ENCODE measurements at regions of chr22 and their contacts with region 1.

Region 1: DNA sequence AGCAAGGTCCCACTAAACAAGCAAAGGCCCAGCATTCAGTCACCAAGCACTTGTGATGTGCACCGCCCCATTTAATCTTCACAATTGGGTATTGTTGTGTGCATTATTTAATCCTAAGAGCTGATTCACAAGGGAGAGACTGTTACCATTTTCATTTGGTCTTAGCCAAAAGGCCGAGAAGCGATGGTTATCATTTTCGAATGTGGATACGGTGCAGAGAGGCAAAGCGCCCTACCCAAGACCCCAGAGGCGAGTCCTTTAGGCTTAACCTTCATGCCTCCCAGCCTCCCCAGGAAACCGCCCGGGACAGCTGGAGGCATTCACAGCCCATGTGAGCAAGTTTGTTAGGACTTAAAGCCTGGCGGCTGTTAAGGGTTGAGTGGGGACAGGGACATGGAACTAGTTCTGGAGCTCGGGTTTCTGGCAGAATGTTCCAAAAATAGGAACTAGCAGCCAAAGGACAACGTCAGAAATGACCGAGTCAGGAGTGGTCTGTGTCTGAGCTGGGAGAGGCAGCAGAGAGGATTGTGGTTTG is 13.0 kb upstream of the UPK3A start:
- DNase-seq: no peak

Region 2: DNA sequence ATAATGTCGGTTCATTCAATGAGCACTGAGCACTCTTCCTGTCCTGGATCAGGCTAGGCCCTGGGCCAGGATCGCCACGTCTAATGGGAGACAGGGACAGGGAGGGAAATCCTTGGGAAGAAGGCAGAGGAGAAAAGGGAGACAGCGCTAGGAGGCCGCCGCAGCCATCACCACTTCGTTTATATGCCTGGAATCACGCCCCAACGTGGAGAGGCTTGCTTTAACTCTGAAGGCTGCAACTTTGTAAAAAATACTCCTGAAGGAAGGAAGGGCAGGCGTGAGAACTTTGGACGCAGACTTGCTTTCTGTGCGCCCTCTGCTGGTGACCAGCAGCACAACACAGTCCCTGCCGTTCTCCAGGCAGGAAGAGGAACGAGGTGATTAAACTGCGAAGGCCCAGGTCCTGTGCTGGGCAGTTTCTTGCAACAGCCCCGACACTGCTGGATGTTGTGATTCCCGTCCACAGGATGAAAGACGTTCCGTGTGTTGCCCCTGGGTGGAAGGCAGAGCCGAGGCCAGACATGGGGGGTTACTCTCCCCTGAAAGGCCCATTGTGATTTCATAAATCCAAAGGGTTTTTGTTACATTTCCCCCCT is 163.9 kb after region 1 on chr22:
- in situ Hi-C with region 1: loop called (anchors 10 kb)
- DNase-seq: peak; percentile 90

Region 3: DNA sequence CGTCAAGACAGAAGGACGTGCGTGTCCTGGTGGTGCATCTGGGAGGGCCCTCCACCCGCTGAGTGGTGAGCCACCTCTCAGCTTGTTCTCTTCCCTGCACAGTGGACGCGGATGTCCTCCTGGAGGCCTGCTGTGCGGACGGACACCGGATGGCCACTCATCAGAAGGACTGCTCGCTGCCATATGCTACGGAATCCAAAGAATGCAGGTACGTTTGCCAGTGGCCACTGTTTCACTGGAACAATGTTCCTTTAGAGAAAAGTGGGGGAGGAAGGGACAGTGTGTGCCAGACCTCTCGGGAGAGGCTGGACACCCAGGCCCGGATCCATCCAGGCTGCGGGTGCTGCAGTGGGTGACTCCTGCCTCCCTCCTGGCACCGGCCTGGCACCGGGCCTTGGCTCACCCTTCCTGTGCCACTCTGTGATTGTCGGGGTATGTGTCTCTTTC is 246.9 kb after region 1 on chr22:
- in situ Hi-C with region 1: no loop called
- DNase-seq: peak; percentile 44